HEK293 (cell line): ENCODE measurements at regions of chrX and their contacts with region 1.

Region 1: GRCh38 chrX:110002300-110003166 is at the start of gene TMEM164:
- H3K4me3 ChIP-seq: peak within 1 kb of the TSS; percentile 52
- H3K27ac ChIP-seq: peak within 1 kb of the TSS; percentile 76
- H3K4me1 ChIP-seq: peaks cover 3% of the 10 kb centered on the region
- CTCF ChIP-seq: no peak

Region 2: DNA sequence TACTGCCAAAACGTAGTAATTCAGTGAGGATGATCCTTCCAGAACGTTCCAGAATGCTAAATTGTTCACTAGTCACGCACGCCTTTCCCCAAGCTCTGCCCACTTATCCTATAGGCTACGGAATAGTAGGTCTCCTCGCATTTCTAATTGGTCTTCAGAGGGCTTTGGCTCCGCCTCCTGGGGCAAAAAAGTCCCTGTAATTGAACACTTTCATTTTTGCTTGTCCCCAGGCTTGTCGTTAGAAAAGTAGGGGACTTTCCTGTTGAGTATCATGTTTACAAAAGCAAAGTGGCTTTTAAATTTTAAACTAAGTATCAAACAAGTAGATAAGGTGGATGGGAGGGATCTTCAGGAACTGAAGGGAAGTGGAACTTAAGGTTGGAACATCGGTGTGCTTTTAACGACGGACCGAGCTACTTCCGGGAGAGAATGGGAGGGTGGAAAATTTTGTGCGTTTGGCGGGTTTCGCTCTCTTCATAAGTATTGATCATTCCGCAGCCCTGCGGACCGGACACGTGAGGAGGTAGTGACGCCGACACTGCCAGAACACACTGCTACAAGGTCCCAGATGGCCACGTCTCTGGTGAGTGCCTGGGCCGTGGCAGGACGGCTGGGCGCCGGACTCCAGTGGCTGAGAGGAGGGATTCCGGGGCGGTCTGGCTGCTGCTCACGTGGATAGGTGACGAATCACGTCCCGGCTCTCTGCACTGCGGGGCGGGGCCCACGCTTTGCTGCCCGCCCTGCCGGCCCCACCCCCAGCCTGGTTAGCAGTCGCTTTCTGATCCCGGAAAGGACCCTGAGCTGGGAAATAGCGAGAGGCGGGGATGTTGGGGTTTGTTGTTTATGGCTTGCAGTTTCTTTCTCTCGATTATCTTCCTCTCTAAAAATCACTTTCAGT is 465.8 kb before region 1 on chrX and contains the start of gene NXT2:
- CTCF ChIA-PET with region 1: no interaction called
- POLR2A ChIA-PET with region 1: interaction called, 11 read pairs
- H3K4me3 ChIP-seq: peak within 1 kb of the TSS; percentile 48
- H3K27ac ChIP-seq: peak within 1 kb of the TSS; percentile 51
- H3K4me1 ChIP-seq: no peaks in the 10 kb centered on the region
- CTCF ChIP-seq: no peak